Activated B cell treated with CpG ODN at 0.5 μM for 24 hours (primary cell): ENCODE measurements at regions of chr15 and their contacts with region 1.

Region 1: DNA sequence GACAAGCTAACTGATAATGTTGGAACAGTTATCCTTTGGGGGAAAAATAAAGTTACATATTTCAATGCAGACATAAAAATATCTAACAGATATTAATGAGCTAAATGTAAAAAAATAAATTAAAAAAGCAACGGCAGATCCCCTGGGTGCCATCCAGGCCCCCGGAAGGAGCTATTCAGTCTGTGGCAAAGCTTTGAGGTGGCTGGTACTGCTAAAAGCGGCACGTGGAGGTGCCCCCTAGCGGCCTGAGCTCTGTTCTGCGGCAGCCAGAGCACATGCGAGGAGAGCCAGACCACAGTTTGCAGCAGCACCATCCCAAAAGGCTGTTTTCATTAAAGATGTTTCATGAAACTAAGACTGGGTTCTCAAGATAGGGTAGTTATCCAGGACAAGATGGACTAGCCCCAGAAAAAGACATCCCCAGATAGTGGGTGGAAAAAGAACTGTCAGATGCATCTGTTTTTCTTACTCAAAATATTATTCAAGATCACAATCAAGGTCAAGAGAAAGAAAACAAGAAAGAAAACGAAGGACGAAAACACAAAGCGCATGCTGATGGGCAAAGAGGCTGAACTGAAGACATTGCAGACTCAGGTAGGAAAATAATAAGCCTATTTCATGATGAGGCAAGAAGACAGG is 18.7 kb downstream of the AP3S2 start:
- DNase-seq: peak; percentile 67
- ATAC-seq: peak; percentile 100
- H3K4me3 Mint-ChIP-seq: no peak overlapping the region
- H3K27ac Mint-ChIP-seq: no peak overlapping the region
- H3K4me1 Mint-ChIP-seq: peaks cover 2% of the 10 kb centered on the region
- H3K27me3 Mint-ChIP-seq: no peaks in the 10 kb centered on the region
- CTCF ChIP-seq: no peak

Region 2: GRCh38 chr15:89750560-89751542 is 124.2 kb before region 1 on chr15 and contains the start of gene MESP1:
- CTCF ChIA-PET with region 1: interaction called, 20 read pairs
- POLR2A ChIA-PET with region 1: no interaction called
- intact Hi-C with region 1: no loop called
- DNase-seq: peak; percentile 89
- ATAC-seq: peak; percentile 93
- H3K4me3 Mint-ChIP-seq: peak within 1 kb of the TSS; percentile 80
- H3K27ac Mint-ChIP-seq: no peak within 1 kb of the TSS
- H3K4me1 Mint-ChIP-seq: peaks cover 4% of the 10 kb centered on the region
- H3K27me3 Mint-ChIP-seq: peaks cover 9% of the 10 kb centered on the region
- CTCF ChIP-seq: no peak
- total RNA-seq, gene MESP1: 0.24 and 0.71 TPM in 2 replicates

Region 3: DNA sequence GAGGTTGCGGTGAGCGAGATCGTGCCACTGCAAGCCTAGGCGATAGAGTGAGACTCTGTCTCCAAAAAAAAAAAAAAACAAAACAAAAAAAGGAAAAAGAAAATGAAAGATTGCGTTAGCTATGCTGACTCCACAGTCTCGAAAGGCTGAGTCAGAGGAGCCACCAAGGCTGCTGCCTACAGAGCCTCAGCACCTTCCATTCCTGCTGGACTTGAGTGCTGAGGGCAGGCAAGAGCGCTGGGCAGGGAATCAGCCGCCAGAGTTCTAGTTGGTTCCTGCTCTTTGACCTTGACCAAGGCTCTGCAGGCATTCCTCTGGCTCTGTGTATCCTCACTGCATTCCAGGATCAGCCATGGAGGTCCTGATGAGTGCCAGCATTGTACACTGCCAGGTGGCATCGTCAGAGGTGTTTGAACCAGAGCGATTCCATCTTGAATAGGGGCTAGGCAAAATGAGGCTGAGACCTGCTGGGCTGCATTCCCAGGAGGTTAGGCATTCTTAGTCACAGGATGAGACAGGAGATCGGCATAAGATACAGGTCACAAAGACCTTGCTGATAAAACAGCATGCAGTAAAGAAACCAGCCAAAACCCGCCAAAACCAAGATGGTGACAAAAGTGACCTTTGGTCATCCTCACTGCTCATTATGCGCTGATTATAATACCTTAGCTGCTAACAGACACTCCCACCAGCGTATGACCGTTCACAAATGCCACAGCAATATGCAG is 93.0 kb before region 1 on chr15:
- CTCF ChIA-PET with region 1: interaction called, 11 read pairs
- POLR2A ChIA-PET with region 1: no interaction called
- intact Hi-C with region 1: no loop called
- DNase-seq: no peak
- ATAC-seq: peak; percentile 74
- H3K4me3 Mint-ChIP-seq: peak overlapping the region; percentile 33
- H3K27ac Mint-ChIP-seq: peak overlapping the region; percentile 76
- H3K4me1 Mint-ChIP-seq: peaks cover 39% of the 10 kb centered on the region
- H3K27me3 Mint-ChIP-seq: no peaks in the 10 kb centered on the region
- CTCF ChIP-seq: no peak

Region 4: GRCh38 chr15:89863918-89864317 is 11.1 kb before region 1 on chr15:
- CTCF ChIA-PET with region 1: interaction called, 18 read pairs
- POLR2A ChIA-PET with region 1: interaction called, 3 read pairs
- intact Hi-C with region 1: no loop called
- DNase-seq: no peak
- ATAC-seq: no peak
- H3K4me3 Mint-ChIP-seq: no peak overlapping the region
- H3K27ac Mint-ChIP-seq: no peak overlapping the region
- H3K4me1 Mint-ChIP-seq: peaks cover 10% of the 10 kb centered on the region
- H3K27me3 Mint-ChIP-seq: no peaks in the 10 kb centered on the region
- CTCF ChIP-seq: no peak

Region 5: DNA sequence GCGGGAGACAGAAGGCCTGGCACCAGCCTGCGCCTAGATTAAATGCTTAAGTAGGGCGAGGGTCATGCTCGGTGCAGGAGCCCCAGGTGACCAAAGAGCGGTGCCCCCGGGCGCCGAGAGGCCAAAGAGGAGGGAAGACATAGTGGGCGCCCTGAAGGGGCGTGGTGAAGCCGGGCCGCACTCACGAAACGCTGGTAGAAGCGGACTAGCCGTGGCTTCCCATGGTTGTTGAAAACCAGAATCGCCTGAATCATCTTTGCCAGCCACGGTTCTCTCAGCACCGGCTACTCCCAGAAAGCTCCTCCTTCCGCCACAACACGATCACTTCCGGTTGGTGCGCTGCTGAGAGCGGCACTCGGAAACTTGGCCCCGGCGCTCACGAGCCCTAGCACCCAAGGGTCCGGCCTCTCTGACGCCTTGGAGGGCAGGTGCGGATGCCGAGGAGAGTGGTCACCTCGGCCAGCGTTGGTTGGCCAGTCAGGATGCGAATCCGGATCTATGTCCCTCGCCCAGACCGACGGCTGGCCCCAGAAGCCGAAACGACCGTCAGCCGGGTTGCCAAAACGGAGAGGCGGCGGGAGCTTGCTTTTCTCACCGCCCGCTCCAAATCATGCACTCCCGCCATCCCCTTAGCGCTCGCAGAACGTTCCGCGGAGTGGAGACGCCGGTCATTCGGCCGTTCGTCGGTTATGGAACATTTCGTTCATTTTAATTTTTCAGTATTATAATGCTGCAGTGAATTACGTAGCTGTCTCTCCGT is 18.8 kb after region 1 on chr15 and contains the start of gene AP3S2:
- CTCF ChIA-PET with region 1: interaction called, 27 read pairs
- POLR2A ChIA-PET with region 1: interaction called, 7 read pairs
- intact Hi-C with region 1: no loop called
- DNase-seq: peak; percentile 82
- ATAC-seq: peak; percentile 89
- H3K4me3 Mint-ChIP-seq: peak within 1 kb of the TSS; percentile 95
- H3K27ac Mint-ChIP-seq: peak within 1 kb of the TSS; percentile 94
- H3K4me1 Mint-ChIP-seq: peaks cover 40% of the 10 kb centered on the region
- H3K27me3 Mint-ChIP-seq: no peaks in the 10 kb centered on the region
- CTCF ChIP-seq: no peak
- total RNA-seq, gene AP3S2: 31.8 and 36.4 TPM in 2 replicates

Region 6: GRCh38 chr15:90191794-90192509 is 316.9 kb after region 1 on chr15:
- CTCF ChIA-PET with region 1: no interaction called
- POLR2A ChIA-PET with region 1: no interaction called
- intact Hi-C with region 1: no loop called
- DNase-seq: peak; percentile 69
- ATAC-seq: peak; percentile 75
- H3K4me3 Mint-ChIP-seq: peak overlapping the region; percentile 77
- H3K27ac Mint-ChIP-seq: peak overlapping the region; percentile 98
- H3K4me1 Mint-ChIP-seq: peaks cover 97% of the 10 kb centered on the region
- H3K27me3 Mint-ChIP-seq: no peaks in the 10 kb centered on the region
- CTCF ChIP-seq: no peak